Caco-2 (cell line): ENCODE measurements at regions of chr5 and their contacts with region 1.

Region 1: DNA sequence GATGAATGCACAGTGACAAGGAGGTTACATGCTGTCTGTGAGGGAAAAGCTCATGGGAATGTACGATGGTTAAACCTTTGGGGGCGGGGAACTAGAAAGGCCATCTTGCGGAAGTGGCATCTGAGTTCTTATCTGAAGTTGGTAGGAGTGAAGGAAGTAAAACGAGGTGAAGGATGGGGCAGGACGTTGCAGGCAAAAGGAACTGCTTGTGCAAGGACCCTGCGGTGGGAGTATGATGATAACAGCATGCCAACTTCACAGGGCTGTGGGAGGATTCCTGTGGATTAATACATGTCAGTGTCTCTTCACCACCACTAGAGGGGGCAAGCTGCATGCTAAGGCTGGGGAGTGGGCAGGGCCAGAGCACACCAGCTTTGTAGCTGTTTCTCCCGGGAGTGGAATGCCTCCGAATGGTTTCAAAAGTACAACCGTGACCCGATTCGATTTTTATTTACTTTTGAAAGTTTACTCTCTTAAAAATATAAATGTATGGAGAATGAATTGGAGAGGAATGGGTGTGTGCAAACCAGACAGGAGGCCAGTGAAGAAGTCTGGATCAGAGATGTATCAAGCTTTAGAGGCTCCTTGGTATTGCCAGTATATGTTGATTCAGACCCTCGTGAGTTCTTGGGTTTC is 62.5 kb downstream of the CYFIP2 start:
- DNase-seq: peak; percentile 68 to 78
- H3K4me3 ChIP-seq: 0 out of 2 replicates have a peak overlapping the region, but pooled peaks have one; percentile 10
- H3K4me3 Mint-ChIP-seq: peak overlapping the region; percentile 39
- H3K27ac Mint-ChIP-seq: no peak overlapping the region
- H3K4me1 ChIP-seq: peaks cover 30% of the 10 kb centered on the region
- H3K4me1 Mint-ChIP-seq: peaks cover 21% of the 10 kb centered on the region
- H3K27me3 ChIP-seq: no peaks in the 10 kb centered on the region
- H3K27me3 Mint-ChIP-seq: no peaks in the 10 kb centered on the region
- CTCF ChIP-seq: peak; percentile 86 to 94

Region 2: DNA sequence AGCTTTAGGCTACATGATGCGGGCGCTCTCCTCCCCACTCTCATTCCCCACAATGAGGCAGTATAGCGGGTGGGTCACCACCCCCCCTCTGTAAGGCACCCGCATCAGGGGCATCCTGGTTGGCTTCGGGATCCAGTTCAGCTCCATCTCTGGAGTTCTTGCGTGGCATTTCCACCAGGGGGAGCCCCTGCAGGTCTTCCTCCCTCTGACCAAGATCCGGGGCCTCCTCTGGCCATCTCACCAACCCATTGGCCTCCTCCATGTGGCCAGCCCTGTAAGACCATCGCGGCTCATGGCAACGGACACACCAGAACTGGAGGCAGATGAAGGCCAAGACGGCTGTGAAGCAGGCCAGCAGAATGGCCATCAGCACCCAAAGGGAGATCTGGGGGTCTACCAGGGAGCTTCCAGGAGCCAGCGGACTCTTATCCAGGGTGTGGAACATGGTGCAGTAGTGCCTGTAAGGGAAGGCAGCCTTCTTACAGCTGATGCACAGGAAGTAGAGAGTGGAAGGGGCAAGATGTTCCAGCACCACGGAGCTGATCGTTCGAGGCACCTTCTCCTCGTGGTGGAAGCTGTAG is 14.5 kb after region 1 on chr5:
- CTCF ChIA-PET with region 1: interaction called, 12 read pairs
- POLR2A ChIA-PET with region 1: no interaction called
- intact Hi-C with region 1: no loop called
- DNase-seq: peak in 1 of 2 experiments; percentile 49
- H3K4me3 ChIP-seq: no peak overlapping the region
- H3K4me3 Mint-ChIP-seq: no peak overlapping the region
- H3K27ac Mint-ChIP-seq: no peak overlapping the region
- H3K4me1 ChIP-seq: no peaks in the 10 kb centered on the region
- H3K4me1 Mint-ChIP-seq: no peaks in the 10 kb centered on the region
- H3K27me3 ChIP-seq: no peaks in the 10 kb centered on the region
- H3K27me3 Mint-ChIP-seq: peaks cover 6% of the 10 kb centered on the region
- CTCF ChIP-seq: peak; percentile 33 to 64

Region 3: GRCh38 chr5:157471709-157472108 is 143.3 kb after region 1 on chr5:
- CTCF ChIA-PET with region 1: interaction called, 16 read pairs
- POLR2A ChIA-PET with region 1: no interaction called
- intact Hi-C with region 1: loop called (anchors 1 kb)
- DNase-seq: peak; percentile 48 to 58
- H3K4me3 ChIP-seq: no peak overlapping the region
- H3K4me3 Mint-ChIP-seq: no peak overlapping the region
- H3K27ac Mint-ChIP-seq: no peak overlapping the region
- H3K4me1 ChIP-seq: no peaks in the 10 kb centered on the region
- H3K4me1 Mint-ChIP-seq: no peaks in the 10 kb centered on the region
- H3K27me3 ChIP-seq: no peaks in the 10 kb centered on the region
- H3K27me3 Mint-ChIP-seq: no peaks in the 10 kb centered on the region
- CTCF ChIP-seq: peak; percentile 50 to 62

Region 4: GRCh38 chr5:157718519-157718918 is 390.1 kb after region 1 on chr5:
- CTCF ChIA-PET with region 1: interaction called, 6 read pairs
- POLR2A ChIA-PET with region 1: no interaction called
- intact Hi-C with region 1: loop called (anchors 1 kb)
- DNase-seq: peak in 1 of 2 experiments; percentile 64
- H3K4me3 ChIP-seq: no peak overlapping the region
- H3K4me3 Mint-ChIP-seq: no peak overlapping the region
- H3K27ac Mint-ChIP-seq: peak overlapping the region; percentile 16
- H3K4me1 ChIP-seq: no peaks in the 10 kb centered on the region
- H3K4me1 Mint-ChIP-seq: no peaks in the 10 kb centered on the region
- H3K27me3 ChIP-seq: no peaks in the 10 kb centered on the region
- H3K27me3 Mint-ChIP-seq: no peaks in the 10 kb centered on the region
- CTCF ChIP-seq: peak; percentile 62 to 67